B cell (primary cell): ENCODE measurements at regions of chr12 and their contacts with region 1.

Region 1: GRCh38 chr12:132908145-132909044 is 21.0 kb upstream of the CHFR start:
- DNase-seq: peak; percentile 97
- ATAC-seq: peak; percentile 90
- H3K4me3 ChIP-seq: peak overlapping the region; percentile 21 to 85 (median 59)
- H3K4me3 Mint-ChIP-seq: peak overlapping the region; percentile 96
- H3K27ac ChIP-seq: peak overlapping the region; percentile 63 to 88
- H3K27ac Mint-ChIP-seq: peak overlapping the region; percentile 98
- H3K4me1 ChIP-seq: peaks cover 5 to 24% of the 10 kb centered on the region in 2 donors
- H3K4me1 Mint-ChIP-seq: peaks cover 14% of the 10 kb centered on the region
- H3K27me3 ChIP-seq: peaks cover 0 to 8% (median 2%) of the 10 kb centered on the region in 4 experiments
- H3K27me3 Mint-ChIP-seq: peaks cover 4% of the 10 kb centered on the region
- CTCF ChIP-seq: no peak

Region 2: GRCh38 chr12:132710422-132711168 is 197.8 kb before region 1 on chr12 and contains the start of gene PGAM5:
- CTCF ChIA-PET with region 1: no interaction called
- POLR2A ChIA-PET with region 1: no interaction called
- intact Hi-C with region 1: loop called (anchors 1 kb)
- DNase-seq: peak; percentile 98
- ATAC-seq: peak; percentile 96
- H3K4me3 ChIP-seq: peak within 1 kb of the TSS; percentile 61 to 91 (median 79)
- H3K4me3 Mint-ChIP-seq: peak within 1 kb of the TSS; percentile 92
- H3K27ac ChIP-seq: peak within 1 kb of the TSS; percentile 95 to 97
- H3K27ac Mint-ChIP-seq: peak within 1 kb of the TSS; percentile 90
- H3K4me1 ChIP-seq: peaks cover 10 to 23% of the 10 kb centered on the region in 2 donors
- H3K4me1 Mint-ChIP-seq: peaks cover 13% of the 10 kb centered on the region
- H3K27me3 ChIP-seq: no peaks in the 10 kb centered on the region
- H3K27me3 Mint-ChIP-seq: no peaks in the 10 kb centered on the region
- CTCF ChIP-seq: no peak
- total RNA-seq, gene PGAM5: 28.3 and 29.9 TPM in 2 replicates

Region 3: DNA sequence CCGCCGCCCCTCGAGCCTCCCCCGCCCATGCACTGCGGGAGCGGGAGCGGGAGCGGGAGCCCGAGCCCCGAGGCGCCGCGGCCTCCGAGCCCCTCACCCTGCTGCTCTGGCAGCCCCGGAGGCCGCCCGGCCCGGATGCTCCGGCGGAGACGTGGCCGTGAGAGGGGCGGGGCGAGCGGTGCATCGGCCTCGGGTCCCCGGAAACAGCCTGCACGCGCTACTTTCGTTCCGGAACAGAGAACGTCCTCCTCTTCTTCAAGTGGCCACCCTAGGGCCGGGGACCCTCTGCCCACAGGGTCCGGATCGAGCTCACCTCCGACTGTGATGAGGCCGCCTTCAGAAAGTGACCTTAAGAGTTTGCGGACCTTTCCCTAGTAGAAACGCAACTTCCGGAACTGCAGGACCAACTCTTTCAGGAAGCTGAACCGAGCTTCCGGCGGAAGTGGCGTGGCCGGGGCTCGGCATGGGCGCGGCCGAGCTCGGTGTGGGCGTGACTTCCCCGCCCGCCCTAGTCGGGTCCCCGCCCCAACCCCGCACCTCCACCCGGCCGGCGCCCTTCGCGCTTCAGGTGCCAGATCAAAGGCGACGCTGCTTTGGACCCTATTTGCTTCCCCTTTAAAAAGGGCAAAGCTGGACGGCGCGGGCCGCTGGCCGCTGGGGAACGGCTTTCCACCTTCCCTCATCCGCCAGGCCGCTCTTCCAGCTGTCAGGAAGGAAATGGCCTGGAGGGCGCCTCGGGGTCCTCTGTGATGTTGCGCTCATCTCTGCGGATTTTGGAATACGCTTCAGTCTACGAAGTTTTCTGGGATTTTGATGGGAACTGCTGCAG is 79.5 kb before region 1 on chr12 and contains the start of gene GOLGA3:
- CTCF ChIA-PET with region 1: interaction called, 5 read pairs
- POLR2A ChIA-PET with region 1: interaction called, 6 read pairs
- intact Hi-C with region 1: loop called (anchors 2 kb)
- DNase-seq: peak; percentile 97
- ATAC-seq: peak; percentile 94
- H3K4me3 ChIP-seq: peak within 1 kb of the TSS; percentile 81 to 90 (median 85)
- H3K4me3 Mint-ChIP-seq: peak within 1 kb of the TSS; percentile 96
- H3K27ac ChIP-seq: peak within 1 kb of the TSS; percentile 99
- H3K27ac Mint-ChIP-seq: peak within 1 kb of the TSS; percentile 100
- H3K4me1 ChIP-seq: peaks cover 27 to 29% of the 10 kb centered on the region in 2 donors
- H3K4me1 Mint-ChIP-seq: peaks cover 42% of the 10 kb centered on the region
- H3K27me3 ChIP-seq: no peaks in the 10 kb centered on the region
- H3K27me3 Mint-ChIP-seq: no peaks in the 10 kb centered on the region
- CTCF ChIP-seq: no peak
- total RNA-seq, gene GOLGA3: 66.0 and 68.9 TPM in 2 replicates

Region 4: DNA sequence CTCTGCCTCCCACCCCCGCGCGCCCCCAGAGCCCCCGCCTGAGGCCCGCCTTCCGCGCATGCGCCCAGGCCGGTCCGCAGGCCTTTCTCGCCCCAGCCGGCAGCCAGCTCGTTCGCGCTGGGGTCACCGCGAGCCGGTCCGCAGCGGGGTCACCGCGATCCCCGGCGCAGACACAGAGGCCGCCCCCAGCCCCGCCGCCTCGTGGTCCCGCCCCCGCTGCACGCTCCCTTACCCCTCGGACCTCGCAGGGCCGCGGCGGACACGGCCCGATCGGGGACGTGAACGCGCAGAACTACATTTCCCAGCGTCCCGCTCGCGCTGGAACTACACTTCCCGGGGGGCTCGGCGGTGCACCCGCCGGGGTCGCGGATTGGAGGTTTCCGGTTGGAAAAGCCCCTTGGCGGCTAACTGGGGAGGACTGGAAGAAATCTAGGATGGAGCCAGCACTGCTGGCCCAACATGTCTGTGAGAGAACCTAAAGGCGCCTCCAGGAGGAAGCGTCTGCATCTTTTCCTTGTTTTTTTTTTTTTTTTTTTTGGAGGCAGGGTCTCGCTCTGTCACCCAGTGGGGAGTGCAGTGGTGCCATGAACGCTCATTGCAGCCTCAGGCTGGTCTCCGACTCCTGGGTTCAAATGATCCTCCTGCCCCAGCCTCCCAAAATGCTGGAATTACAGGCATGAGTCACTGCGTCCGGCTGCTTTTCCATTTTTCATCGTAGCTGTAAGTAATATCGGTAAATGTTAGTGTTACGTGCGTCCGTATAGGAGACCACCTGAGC is 47.8 kb after region 1 on chr12 and contains the start of gene ZNF605:
- CTCF ChIA-PET with region 1: interaction called, 5 read pairs
- POLR2A ChIA-PET with region 1: interaction called, 5 read pairs
- intact Hi-C with region 1: loop called (anchors 1 kb)
- DNase-seq: peak; percentile 93
- ATAC-seq: peak; percentile 91
- H3K4me3 ChIP-seq: peak within 1 kb of the TSS; percentile 69 to 95 (median 87)
- H3K4me3 Mint-ChIP-seq: peak within 1 kb of the TSS; percentile 93
- H3K27ac ChIP-seq: peak within 1 kb of the TSS; percentile 65 to 93
- H3K27ac Mint-ChIP-seq: peak within 1 kb of the TSS; percentile 93
- H3K4me1 ChIP-seq: peaks cover 11 to 19% of the 10 kb centered on the region in 2 donors
- H3K4me1 Mint-ChIP-seq: peaks cover 26% of the 10 kb centered on the region
- H3K27me3 ChIP-seq: no peaks in the 10 kb centered on the region
- H3K27me3 Mint-ChIP-seq: no peaks in the 10 kb centered on the region
- CTCF ChIP-seq: no peak
- total RNA-seq, gene ZNF605: 19.7 and 21.7 TPM in 2 replicates

Region 5: GRCh38 chr12:133037207-133038005 is 129.0 kb after region 1 on chr12 and contains the start of gene ZNF84:
- CTCF ChIA-PET with region 1: no interaction called
- POLR2A ChIA-PET with region 1: interaction called, 3 read pairs
- intact Hi-C with region 1: loop called (anchors 2 kb)
- DNase-seq: peak; percentile 99
- ATAC-seq: peak; percentile 95
- H3K4me3 ChIP-seq: peak within 1 kb of the TSS; percentile 51 to 82 (median 69)
- H3K4me3 Mint-ChIP-seq: peak within 1 kb of the TSS; percentile 97
- H3K27ac ChIP-seq: peak within 1 kb of the TSS; percentile 88 to 95
- H3K27ac Mint-ChIP-seq: peak within 1 kb of the TSS; percentile 99
- H3K4me1 ChIP-seq: peaks cover 7 to 10% of the 10 kb centered on the region in 2 donors
- H3K4me1 Mint-ChIP-seq: peaks cover 13% of the 10 kb centered on the region
- H3K27me3 ChIP-seq: no peaks in the 10 kb centered on the region
- H3K27me3 Mint-ChIP-seq: peaks cover 3% of the 10 kb centered on the region
- CTCF ChIP-seq: no peak
- total RNA-seq, gene ZNF84: 48.4 and 61.5 TPM in 2 replicates

Region 6: DNA sequence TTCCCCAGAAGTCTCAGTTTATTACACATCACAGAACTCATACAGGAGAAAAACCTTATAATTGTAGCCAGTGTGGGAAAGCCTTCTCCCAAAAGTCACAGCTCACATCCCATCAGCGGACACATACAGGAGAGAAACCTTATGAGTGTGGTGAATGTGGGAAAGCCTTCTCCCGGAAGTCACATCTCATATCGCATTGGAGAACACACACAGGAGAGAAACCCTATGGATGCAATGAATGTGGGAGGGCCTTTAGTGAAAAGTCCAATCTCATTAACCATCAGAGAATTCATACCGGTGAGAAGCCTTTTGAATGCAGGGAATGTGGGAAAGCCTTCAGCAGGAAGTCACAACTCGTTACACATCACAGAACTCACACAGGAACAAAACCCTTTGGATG is 149.1 kb after region 1 on chr12:
- CTCF ChIA-PET with region 1: no interaction called
- POLR2A ChIA-PET with region 1: no interaction called
- intact Hi-C with region 1: no loop called
- DNase-seq: no peak
- ATAC-seq: no peak
- H3K4me3 ChIP-seq: peak overlapping the region in 1 of 5 experiments; percentile 27
- H3K4me3 Mint-ChIP-seq: no peak overlapping the region
- H3K27ac ChIP-seq: no peak overlapping the region
- H3K27ac Mint-ChIP-seq: peak overlapping the region; percentile 15
- H3K4me1 ChIP-seq: no peaks in the 10 kb centered on the region
- H3K4me1 Mint-ChIP-seq: no peaks in the 10 kb centered on the region
- H3K27me3 ChIP-seq: no peaks in the 10 kb centered on the region
- H3K27me3 Mint-ChIP-seq: no peaks in the 10 kb centered on the region
- CTCF ChIP-seq: no peak

Region 7: GRCh38 chr12:133130038-133130807 is 221.8 kb after region 1 on chr12 and contains the starts of genes ZNF10 and ZNF891:
- CTCF ChIA-PET with region 1: interaction called, 4 read pairs
- POLR2A ChIA-PET with region 1: no interaction called
- intact Hi-C with region 1: loop called (anchors 1 kb)
- DNase-seq: peak; percentile 99
- ATAC-seq: peak; percentile 85
- H3K4me3 ChIP-seq: peak within 1 kb of the TSS; percentile 66 to 86 (median 77)
- H3K4me3 Mint-ChIP-seq: peak within 1 kb of the TSS; percentile 100
- H3K27ac ChIP-seq: peak within 1 kb of the TSS; percentile 98 to 99
- H3K27ac Mint-ChIP-seq: peak within 1 kb of the TSS; percentile 100
- H3K4me1 ChIP-seq: peaks cover 4 to 13% of the 10 kb centered on the region in 2 donors
- H3K4me1 Mint-ChIP-seq: peaks cover 18% of the 10 kb centered on the region
- H3K27me3 ChIP-seq: no peaks in the 10 kb centered on the region
- H3K27me3 Mint-ChIP-seq: no peaks in the 10 kb centered on the region
- CTCF ChIP-seq: no peak
- total RNA-seq, gene ZNF10: 20.0 and 20.9 TPM in 2 replicates
- total RNA-seq, gene ZNF891: 6.8 and 7.7 TPM in 2 replicates